WTC11 (cell line): ENCODE measurements at regions of chrX and their contacts with region 1.

Region 1: GRCh38 chrX:134764212-134764785 is 106.0 kb upstream of the PLAC1 start:
- DNase-seq: no peak
- ATAC-seq: peak; percentile 98
- H3K4me3 Mint-ChIP-seq: no peak overlapping the region
- H3K27ac Mint-ChIP-seq: no peak overlapping the region
- H3K4me1 Mint-ChIP-seq: peaks cover 13% of the 10 kb centered on the region
- H3K27me3 Mint-ChIP-seq: no peaks in the 10 kb centered on the region
- CTCF ChIP-seq: no peak

Region 2: DNA sequence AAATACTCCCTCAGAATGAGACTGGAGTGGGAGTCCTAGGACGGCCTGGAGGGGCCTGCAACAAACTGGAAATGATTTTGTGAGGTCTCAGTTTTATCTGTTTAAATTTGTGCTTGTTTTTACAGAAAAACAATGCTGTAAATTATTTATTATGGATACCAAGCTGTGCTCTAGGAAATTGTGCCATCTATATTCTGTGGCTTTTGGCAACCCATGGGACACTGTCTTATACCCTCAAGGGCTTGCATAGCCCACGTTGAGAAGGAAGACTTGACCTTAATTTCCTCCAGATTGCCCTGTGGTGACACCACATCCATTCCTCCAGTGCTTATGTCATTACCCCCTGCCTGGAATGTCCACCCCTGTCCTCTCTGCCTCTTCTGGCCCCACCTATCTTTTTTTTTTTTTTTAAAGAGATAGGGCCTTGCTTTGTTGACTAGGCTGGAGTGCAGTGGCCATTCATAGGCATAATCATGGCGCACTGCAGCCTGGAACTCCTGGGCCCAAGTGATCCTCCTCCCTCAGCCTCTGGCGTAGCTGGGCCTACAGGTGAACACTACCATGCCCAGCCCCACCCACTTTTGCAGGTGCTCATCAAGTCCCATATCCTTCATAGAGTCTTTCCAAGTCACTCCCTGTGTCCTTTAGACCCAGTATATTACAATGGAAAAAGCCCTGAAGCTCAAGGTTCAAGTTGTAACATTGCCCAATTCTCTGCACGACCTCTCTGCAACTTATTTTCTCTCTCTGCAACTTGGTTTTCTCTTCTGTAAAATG is 226.9 kb before region 1 on chrX:
- CTCF ChIA-PET with region 1: interaction called, 11 read pairs
- POLR2A ChIA-PET with region 1: no interaction called
- DNase-seq: no peak
- ATAC-seq: no peak
- H3K4me3 Mint-ChIP-seq: no peak overlapping the region
- H3K27ac Mint-ChIP-seq: no peak overlapping the region
- H3K4me1 Mint-ChIP-seq: peaks cover 23% of the 10 kb centered on the region
- H3K27me3 Mint-ChIP-seq: peaks cover 13% of the 10 kb centered on the region
- CTCF ChIP-seq: no peak

Region 3: GRCh38 chrX:134727371-134727770 is 36.9 kb before region 1 on chrX:
- CTCF ChIA-PET with region 1: interaction called, 10 read pairs
- POLR2A ChIA-PET with region 1: no interaction called
- DNase-seq: no peak
- ATAC-seq: peak; percentile 48
- H3K4me3 Mint-ChIP-seq: no peak overlapping the region
- H3K27ac Mint-ChIP-seq: no peak overlapping the region
- H3K4me1 Mint-ChIP-seq: no peaks in the 10 kb centered on the region
- H3K27me3 Mint-ChIP-seq: no peaks in the 10 kb centered on the region
- CTCF ChIP-seq: no peak

Region 4: GRCh38 chrX:134782796-134783195 is 18.5 kb after region 1 on chrX:
- CTCF ChIA-PET with region 1: interaction called, 13 read pairs
- POLR2A ChIA-PET with region 1: no interaction called
- DNase-seq: no peak
- ATAC-seq: no peak
- H3K4me3 Mint-ChIP-seq: no peak overlapping the region
- H3K27ac Mint-ChIP-seq: no peak overlapping the region
- H3K4me1 Mint-ChIP-seq: no peaks in the 10 kb centered on the region
- H3K27me3 Mint-ChIP-seq: no peaks in the 10 kb centered on the region
- CTCF ChIP-seq: no peak